ENCODE measurements at regions of chr1 and their contacts with region 1.

Region 1: GRCh38 chr1:33219881-33220661 is 36.2 kb upstream of the ZNF362 start:
- ATAC-seq: peak in 4 of 8 experiments; percentile 27 to 62 (median 55)
- H3K4me3 ChIP-seq: no peak overlapping the region
- H3K27ac ChIP-seq: no peak overlapping the region
- H3K4me1 ChIP-seq: no peaks in the 10 kb centered on the region

Region 2: GRCh38 chr1:33099290-33100118 is 120.6 kb before region 1 on chr1:
- in situ Hi-C with region 1: loop called in 1 of 9 experiments (anchors 25 kb)
- ATAC-seq: peak in 3 of 8 experiments; percentile 58 to 91 (median 88)
- H3K4me3 ChIP-seq: no peak overlapping the region
- H3K27ac ChIP-seq: no peak overlapping the region
- H3K4me1 ChIP-seq: peaks cover 0 to 2% of the 10 kb centered on the region in 2 donors

Region 3: DNA sequence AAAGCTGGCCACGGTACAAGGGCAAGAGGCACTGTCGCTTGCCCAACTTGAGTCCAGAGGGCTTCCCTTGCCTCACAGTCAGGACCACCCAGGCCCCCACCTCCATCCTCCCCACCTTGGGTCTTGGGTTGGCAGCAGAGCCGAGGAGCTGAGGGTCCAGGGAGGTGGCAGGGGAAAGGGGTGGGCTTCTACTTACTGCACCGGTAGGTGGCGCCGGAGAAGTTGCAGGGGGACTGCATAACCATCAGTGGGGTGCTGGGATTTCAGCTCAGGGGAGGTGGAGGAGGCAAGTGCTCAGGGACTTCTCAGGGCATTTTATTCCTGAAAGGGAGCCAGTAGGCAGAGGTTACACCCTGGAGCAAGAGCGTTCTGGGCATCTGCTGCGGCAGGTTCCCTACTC is 82.3 kb before region 1 on chr1:
- in situ Hi-C with region 1: no loop called
- ATAC-seq: peak in 6 of 8 experiments; percentile 43 to 77 (median 64)
- H3K4me3 ChIP-seq: no peak overlapping the region
- H3K27ac ChIP-seq: no peak overlapping the region
- H3K4me1 ChIP-seq: peaks cover 0 to 2% of the 10 kb centered on the region in 2 donors

Measured in motor neuron (in vitro differentiated cells).